Activated B cell treated with CpG ODN at 0.5 μM for 24 hours (primary cell): ENCODE measurements at regions of chr11 and their contacts with region 1.

Region 1: GRCh38 chr11:123580557-123581275 is 73.7 kb downstream of the SCN3B start:
- DNase-seq: peak; percentile 48
- ATAC-seq: peak; percentile 89
- H3K4me3 Mint-ChIP-seq: no peak overlapping the region
- H3K27ac Mint-ChIP-seq: peak overlapping the region; percentile 27
- H3K4me1 Mint-ChIP-seq: peaks cover 22% of the 10 kb centered on the region
- H3K27me3 Mint-ChIP-seq: no peaks in the 10 kb centered on the region
- CTCF ChIP-seq: no peak

Region 2: DNA sequence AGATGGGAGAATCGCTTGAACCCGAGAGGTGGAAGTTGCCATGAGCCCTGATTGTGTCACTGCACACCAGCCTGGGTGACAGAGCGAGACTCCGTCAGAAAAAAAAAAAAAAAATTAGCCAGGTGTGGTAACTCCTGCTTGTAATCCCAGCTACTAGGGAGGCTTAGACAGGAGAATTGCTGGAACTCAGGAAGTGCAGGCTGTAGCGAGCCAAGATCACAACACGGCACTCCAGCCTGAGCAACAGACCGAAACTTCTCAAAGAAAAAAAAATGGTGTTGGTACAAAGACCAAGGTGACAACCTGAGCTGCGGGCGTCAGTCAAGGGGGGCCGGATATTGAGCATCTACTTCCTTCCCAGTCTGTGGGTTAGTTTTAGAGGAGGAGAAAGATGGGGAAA is 470.4 kb before region 1 on chr11:
- CTCF ChIA-PET with region 1: no interaction called
- POLR2A ChIA-PET with region 1: no interaction called
- intact Hi-C with region 1: loop called (anchors 5 kb)
- DNase-seq: no peak
- ATAC-seq: no peak
- H3K4me3 Mint-ChIP-seq: no peak overlapping the region
- H3K27ac Mint-ChIP-seq: no peak overlapping the region
- H3K4me1 Mint-ChIP-seq: no peaks in the 10 kb centered on the region
- H3K27me3 Mint-ChIP-seq: peaks cover 13% of the 10 kb centered on the region
- CTCF ChIP-seq: no peak

Region 3: DNA sequence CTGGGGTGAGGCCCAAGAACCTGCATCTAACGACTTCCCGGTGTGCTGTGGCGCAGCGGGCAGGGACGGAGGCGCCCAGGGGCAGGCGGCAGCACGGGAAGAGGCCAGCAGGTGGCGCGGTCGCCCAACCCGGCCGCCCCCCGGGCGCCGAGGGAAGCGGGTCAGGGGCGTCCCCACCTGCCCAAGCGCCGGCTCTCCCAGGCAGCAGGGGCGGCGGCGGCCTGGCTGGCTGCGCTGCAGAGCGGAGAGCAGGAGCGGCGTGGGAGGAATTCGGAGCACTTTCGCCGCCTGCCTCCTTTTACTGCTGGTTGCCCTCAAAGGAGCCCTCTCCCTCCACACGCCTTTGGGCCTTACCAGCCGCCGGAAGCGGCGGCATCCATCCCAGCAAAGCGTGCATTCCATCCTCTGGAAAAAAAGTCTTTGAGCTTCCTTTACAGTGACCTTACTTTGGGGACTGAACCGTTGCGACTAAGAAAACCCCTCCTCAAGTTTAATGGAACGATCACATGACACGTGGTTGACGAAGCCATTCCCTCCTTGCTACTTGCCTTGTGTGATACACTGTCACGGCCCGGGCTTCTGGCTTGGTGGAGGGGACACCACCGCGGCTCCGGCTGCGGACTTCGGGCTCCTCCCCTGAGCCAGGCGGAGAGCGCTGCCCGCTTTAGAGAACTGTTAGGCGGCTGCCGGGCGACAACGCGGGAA is 278.9 kb before region 1 on chr11:
- CTCF ChIA-PET with region 1: no interaction called
- POLR2A ChIA-PET with region 1: no interaction called
- intact Hi-C with region 1: loop called (anchors 1 kb)
- DNase-seq: peak; percentile 65
- ATAC-seq: peak; percentile 79
- H3K4me3 Mint-ChIP-seq: peak overlapping the region; percentile 68
- H3K27ac Mint-ChIP-seq: no peak overlapping the region
- H3K4me1 Mint-ChIP-seq: peaks cover 29% of the 10 kb centered on the region
- H3K27me3 Mint-ChIP-seq: peaks cover 4% of the 10 kb centered on the region
- CTCF ChIP-seq: no peak

Region 4: GRCh38 chr11:123407130-123407995 is 173.4 kb before region 1 on chr11:
- CTCF ChIA-PET with region 1: interaction called, 36 read pairs
- POLR2A ChIA-PET with region 1: no interaction called
- intact Hi-C with region 1: loop called (anchors 1 kb)
- DNase-seq: no peak
- ATAC-seq: peak; percentile 56
- H3K4me3 Mint-ChIP-seq: no peak overlapping the region
- H3K27ac Mint-ChIP-seq: no peak overlapping the region
- H3K4me1 Mint-ChIP-seq: peaks cover 6% of the 10 kb centered on the region
- H3K27me3 Mint-ChIP-seq: peaks cover 4% of the 10 kb centered on the region
- CTCF ChIP-seq: no peak

Region 5: DNA sequence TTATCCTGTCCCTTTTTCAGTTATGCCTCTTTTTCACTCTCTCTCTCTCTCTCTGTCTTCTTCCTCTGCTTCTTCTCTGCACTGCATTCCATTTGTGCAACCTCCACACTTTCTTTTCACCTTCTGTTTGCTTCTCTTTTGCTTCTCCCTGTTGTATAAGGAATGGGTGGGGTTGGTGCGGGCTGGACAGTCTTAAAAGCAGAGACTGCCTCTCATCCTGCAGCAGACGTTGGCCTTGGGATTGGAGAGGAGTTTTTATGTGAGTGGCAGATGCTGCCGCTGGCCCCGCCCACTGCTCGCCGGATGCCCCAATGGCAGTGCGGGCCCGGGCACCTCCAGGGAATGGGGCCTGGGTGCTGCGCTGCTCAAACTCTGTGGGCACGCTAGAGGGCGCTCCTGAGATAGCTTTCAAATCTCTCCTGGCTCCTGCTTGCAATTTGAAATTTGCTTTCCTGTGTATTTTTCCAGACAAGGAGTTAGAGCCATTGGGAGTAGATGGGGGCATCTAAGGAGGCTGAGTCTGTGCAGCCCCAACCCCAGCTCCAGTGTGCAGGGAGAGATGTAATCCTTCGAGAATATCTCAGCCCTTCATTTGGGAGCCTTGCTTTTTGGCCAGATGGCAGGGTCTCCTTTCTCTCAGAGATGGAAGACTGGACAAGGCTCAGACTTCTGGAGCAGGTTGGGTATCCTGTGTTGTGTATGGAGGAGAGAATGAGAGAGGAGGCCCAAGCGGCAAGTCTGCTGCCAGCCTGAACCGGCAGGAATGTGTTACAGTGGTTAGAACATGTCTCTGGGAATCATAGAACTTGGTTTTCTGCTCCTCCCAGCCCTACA is 69.5 kb before region 1 on chr11:
- CTCF ChIA-PET with region 1: interaction called, 17 read pairs
- POLR2A ChIA-PET with region 1: no interaction called
- intact Hi-C with region 1: loop called (anchors 1 kb)
- DNase-seq: peak; percentile 52
- ATAC-seq: peak; percentile 99
- H3K4me3 Mint-ChIP-seq: no peak overlapping the region
- H3K27ac Mint-ChIP-seq: no peak overlapping the region
- H3K4me1 Mint-ChIP-seq: peaks cover 6% of the 10 kb centered on the region
- H3K27me3 Mint-ChIP-seq: no peaks in the 10 kb centered on the region
- CTCF ChIP-seq: peak; percentile 39

Region 6: GRCh38 chr11:123560006-123560405 is 20.7 kb before region 1 on chr11:
- CTCF ChIA-PET with region 1: interaction called, 11 read pairs
- POLR2A ChIA-PET with region 1: no interaction called
- intact Hi-C with region 1: loop called (anchors 2 kb)
- DNase-seq: peak; percentile 38
- ATAC-seq: peak; percentile 88
- H3K4me3 Mint-ChIP-seq: peak overlapping the region; percentile 86
- H3K27ac Mint-ChIP-seq: peak overlapping the region; percentile 68
- H3K4me1 Mint-ChIP-seq: peaks cover 23% of the 10 kb centered on the region
- H3K27me3 Mint-ChIP-seq: no peaks in the 10 kb centered on the region
- CTCF ChIP-seq: no peak

Region 7: GRCh38 chr11:123696183-123696582 is 115.5 kb after region 1 on chr11:
- CTCF ChIA-PET with region 1: no interaction called
- POLR2A ChIA-PET with region 1: no interaction called
- intact Hi-C with region 1: no loop called
- DNase-seq: no peak
- ATAC-seq: no peak
- H3K4me3 Mint-ChIP-seq: no peak overlapping the region
- H3K27ac Mint-ChIP-seq: no peak overlapping the region
- H3K4me1 Mint-ChIP-seq: peaks cover 2% of the 10 kb centered on the region
- H3K27me3 Mint-ChIP-seq: peaks cover 12% of the 10 kb centered on the region
- CTCF ChIP-seq: no peak

Region 8: DNA sequence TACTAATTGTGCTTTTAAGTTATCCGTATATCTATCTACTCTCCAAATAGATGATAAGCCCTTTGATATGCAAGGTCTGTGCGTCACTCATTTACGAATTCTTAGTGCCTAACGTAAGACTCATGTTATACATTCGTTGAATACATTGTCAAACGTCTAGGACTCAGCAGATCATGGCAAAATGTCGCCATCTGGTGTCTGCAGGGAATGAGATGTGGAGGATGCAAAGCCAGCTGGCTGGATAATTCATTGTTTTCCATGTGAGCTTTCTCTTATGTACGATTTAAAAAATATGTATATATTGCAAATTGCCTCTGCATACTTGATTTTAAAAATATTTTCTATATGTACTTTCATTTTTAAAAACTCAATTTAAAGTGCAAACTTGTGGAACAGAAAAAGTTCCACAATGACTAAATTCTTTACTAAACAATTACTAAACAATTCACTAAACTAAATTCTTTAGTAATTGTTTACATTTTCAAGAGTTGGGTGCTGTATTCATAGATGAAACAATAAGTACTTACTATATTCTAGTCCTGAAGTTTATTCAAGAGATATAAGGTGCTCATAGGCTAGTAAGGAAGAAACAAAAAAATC is 127.0 kb after region 1 on chr11:
- CTCF ChIA-PET with region 1: interaction called, 42 read pairs
- POLR2A ChIA-PET with region 1: interaction called, 3 read pairs
- intact Hi-C with region 1: loop called (anchors 1 kb)
- DNase-seq: no peak
- ATAC-seq: peak; percentile 37
- H3K4me3 Mint-ChIP-seq: no peak overlapping the region
- H3K27ac Mint-ChIP-seq: no peak overlapping the region
- H3K4me1 Mint-ChIP-seq: peaks cover 7% of the 10 kb centered on the region
- H3K27me3 Mint-ChIP-seq: peaks cover 6% of the 10 kb centered on the region
- CTCF ChIP-seq: no peak